ENCODE measurements at regions of chr1 and their contacts with region 1.

Region 1: DNA sequence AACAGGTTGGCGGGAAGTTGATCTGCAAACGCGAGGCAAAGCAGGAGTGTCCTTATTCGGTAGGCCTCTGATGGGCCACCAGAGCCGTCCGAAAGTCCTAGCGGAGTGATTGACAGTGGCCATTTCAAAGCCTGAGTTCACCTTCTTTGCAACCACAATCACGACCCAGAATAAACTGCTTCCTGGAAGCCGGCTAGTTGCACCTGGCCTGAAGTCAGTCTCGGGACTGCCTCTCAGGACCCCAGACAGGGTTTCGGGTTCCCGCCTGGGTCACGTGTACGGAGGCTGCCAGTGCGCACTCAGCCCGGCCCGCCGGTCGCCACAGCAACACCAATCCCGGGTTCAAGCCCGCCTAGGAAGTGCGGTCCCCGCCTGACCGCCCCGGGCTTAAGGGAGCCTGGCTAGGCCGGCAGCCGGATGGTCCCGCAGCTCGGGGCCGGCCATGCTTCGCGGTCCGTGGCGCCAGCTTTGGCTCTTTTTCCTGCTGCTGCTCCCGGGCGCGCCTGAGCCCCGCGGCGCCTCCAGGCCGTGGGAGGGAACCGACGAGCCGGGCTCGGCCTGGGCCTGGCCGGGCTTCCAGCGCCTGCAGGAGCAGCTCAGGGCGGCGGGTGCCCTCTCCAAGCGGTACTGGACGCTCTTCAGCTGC is at the start of gene TOR3A:
- DNase-seq: peak; percentile 68
- ATAC-seq: peak; percentile 92
- H3K4me3 ChIP-seq: peak within 1 kb of the TSS; percentile 73 to 82
- H3K27ac ChIP-seq: peak within 1 kb of the TSS; percentile 74
- H3K4me1 ChIP-seq: peaks cover 0 to 23% of the 10 kb centered on the region in 2 experiments; a peak in 3 of 4 replicates
- H3K27me3 ChIP-seq: no peaks in the 10 kb centered on the region
- CTCF ChIP-seq: no peak
- POLR2A ChIP-seq: no peak
- RAD21 ChIP-seq: no peak
- total RNA-seq, gene TOR3A: 27.0 TPM

Region 2: DNA sequence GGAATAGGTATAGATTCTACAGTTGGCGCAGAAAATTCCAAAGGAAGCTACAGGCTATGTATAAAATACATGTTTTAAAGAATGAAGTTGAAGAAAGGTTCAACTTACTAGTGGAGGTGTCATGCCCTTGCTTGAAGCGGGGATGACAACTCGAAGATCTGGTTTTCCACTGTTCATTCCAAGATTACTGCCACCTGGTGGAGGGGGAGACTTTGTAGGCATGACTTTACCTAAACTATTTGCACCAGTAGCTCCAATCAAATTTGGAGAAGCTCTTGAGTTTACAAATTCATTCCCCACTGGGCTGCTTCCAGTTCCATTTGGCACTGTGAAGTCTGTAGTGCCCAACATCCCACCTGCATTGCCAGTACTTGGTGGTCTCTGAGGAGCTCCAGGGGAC is 365.7 kb after region 1 on chr1:
- CTCF ChIA-PET with region 1: interaction called, 3 read pairs
- POLR2A ChIA-PET with region 1: no interaction called
- RAD21 ChIA-PET with region 1: no interaction called
- intact Hi-C with region 1: loop called (anchors 10 kb)
- DNase-seq: peak; percentile 12
- ATAC-seq: peak; percentile 67; the same call in 1 of the 2 replicates
- H3K4me3 ChIP-seq: no peak overlapping the region
- H3K27ac ChIP-seq: no peak overlapping the region
- H3K4me1 ChIP-seq: no peaks in the 10 kb centered on the region
- H3K27me3 ChIP-seq: no peaks in the 10 kb centered on the region
- CTCF ChIP-seq: peak; percentile 15 to 55 (median 54); a peak in 5 of 6 replicates
- POLR2A ChIP-seq: no peak
- RAD21 ChIP-seq: 0 out of 2 replicates have a peak, but pooled peaks have one; percentile 10

Region 3: DNA sequence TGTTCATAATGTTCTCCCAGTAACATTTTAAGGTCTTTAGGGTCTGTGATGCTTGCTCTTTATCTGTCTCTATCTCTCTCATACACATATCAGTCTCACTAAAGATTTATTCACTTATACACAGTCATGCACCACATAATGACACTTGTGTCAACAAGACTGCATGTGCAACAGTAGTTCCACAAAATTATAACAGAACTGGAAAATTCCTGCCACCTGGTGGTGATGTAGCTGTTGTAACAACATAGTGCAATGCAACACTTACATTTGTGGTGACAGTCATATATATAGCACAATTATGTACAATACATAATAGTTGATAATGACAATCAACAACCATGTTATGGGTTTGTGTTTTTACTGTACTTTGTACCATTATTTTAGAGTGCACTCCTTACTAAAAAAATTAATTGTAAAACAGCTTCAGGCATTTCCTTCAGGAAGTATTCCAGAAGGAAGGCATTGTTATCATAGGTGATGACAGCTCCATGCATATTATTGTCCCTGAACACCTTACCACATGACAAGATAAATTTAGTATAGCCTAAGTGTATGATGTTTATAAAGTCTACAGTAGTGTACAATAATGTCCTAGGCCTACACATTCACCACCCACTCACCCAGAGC is 517.9 kb after region 1 on chr1:
- CTCF ChIA-PET with region 1: no interaction called
- POLR2A ChIA-PET with region 1: no interaction called
- RAD21 ChIA-PET with region 1: no interaction called
- intact Hi-C with region 1: loop called (anchors 1 kb)
- DNase-seq: peak; percentile 44
- ATAC-seq: peak; percentile 95
- H3K4me3 ChIP-seq: no peak overlapping the region
- H3K27ac ChIP-seq: no peak overlapping the region
- H3K4me1 ChIP-seq: no peaks in the 10 kb centered on the region
- H3K27me3 ChIP-seq: no peaks in the 10 kb centered on the region
- CTCF ChIP-seq: peak; percentile 55 to 70 (median 56); a peak in 5 of 6 replicates
- POLR2A ChIP-seq: no peak
- RAD21 ChIP-seq: peak; percentile 72

Measured in HCT116 (cell line).